GM13977 (cell line): ENCODE measurements at regions of chr9 and their contacts with region 1.

Region 1: GRCh38 chr9:121992571-121993212 is 100.4 kb downstream of the TTLL11 start:
- DNase-seq: peak; percentile 68
- CTCF ChIP-seq: peak; percentile 56

Region 2: GRCh38 chr9:121545875-121546423 is 446.7 kb before region 1 on chr9:
- in situ Hi-C with region 1: loop called (anchors 25 kb)
- DNase-seq: peak; percentile 92
- CTCF ChIP-seq: peak; percentile 98

Region 3: GRCh38 chr9:121686930-121687541 is 305.7 kb before region 1 on chr9:
- in situ Hi-C with region 1: loop called (anchors 25 kb)
- DNase-seq: peak; percentile 86
- CTCF ChIP-seq: peak; percentile 89